MCF 10A (cell line): ENCODE measurements at regions of chr12 and their contacts with region 1.

Region 1: GRCh38 chr12:3299929-3300832 is 190.8 kb upstream of the PRMT8 start:
- DNase-seq: peak; percentile 96
- H3K4me3 Mint-ChIP-seq: peak overlapping the region; percentile 71
- H3K27ac Mint-ChIP-seq: peak overlapping the region; percentile 98
- H3K4me1 Mint-ChIP-seq: peaks cover 34% of the 10 kb centered on the region
- H3K27me3 Mint-ChIP-seq: no peaks in the 10 kb centered on the region
- CTCF ChIP-seq: peak; percentile 98

Region 2: GRCh38 chr12:2877047-2877952 is 422.9 kb before region 1 on chr12 and contains the starts of genes FOXM1 and RHNO1:
- CTCF ChIA-PET with region 1: no interaction called
- POLR2A ChIA-PET with region 1: no interaction called
- intact Hi-C with region 1: no loop called
- DNase-seq: peak; percentile 86
- H3K4me3 Mint-ChIP-seq: peak within 1 kb of the TSS; percentile 97
- H3K27ac Mint-ChIP-seq: peak within 1 kb of the TSS; percentile 98
- H3K4me1 Mint-ChIP-seq: peaks cover 23% of the 10 kb centered on the region
- H3K27me3 Mint-ChIP-seq: no peaks in the 10 kb centered on the region
- CTCF ChIP-seq: no peak
- total RNA-seq, gene FOXM1: 31.7 and 49.9 TPM in 2 replicates
- total RNA-seq, gene RHNO1: 47.0 and 60.9 TPM in 2 replicates

Region 3: GRCh38 chr12:3150931-3151835 is 149.0 kb before region 1 on chr12:
- CTCF ChIA-PET with region 1: no interaction called
- POLR2A ChIA-PET with region 1: no interaction called
- intact Hi-C with region 1: no loop called
- DNase-seq: no peak
- H3K4me3 Mint-ChIP-seq: no peak overlapping the region
- H3K27ac Mint-ChIP-seq: no peak overlapping the region
- H3K4me1 Mint-ChIP-seq: no peaks in the 10 kb centered on the region
- H3K27me3 Mint-ChIP-seq: no peaks in the 10 kb centered on the region
- CTCF ChIP-seq: no peak

Region 4: GRCh38 chr12:3350422-3350821 is 50.2 kb after region 1 on chr12:
- CTCF ChIA-PET with region 1: interaction called, 12 read pairs
- POLR2A ChIA-PET with region 1: no interaction called
- intact Hi-C with region 1: no loop called
- DNase-seq: no peak
- H3K4me3 Mint-ChIP-seq: no peak overlapping the region
- H3K27ac Mint-ChIP-seq: no peak overlapping the region
- H3K4me1 Mint-ChIP-seq: no peaks in the 10 kb centered on the region
- H3K27me3 Mint-ChIP-seq: no peaks in the 10 kb centered on the region
- CTCF ChIP-seq: no peak

Region 5: GRCh38 chr12:3520168-3520567 is 220.0 kb after region 1 on chr12:
- CTCF ChIA-PET with region 1: interaction called, 111 read pairs
- POLR2A ChIA-PET with region 1: interaction called, 24 read pairs
- intact Hi-C with region 1: loop called (anchors 1 kb)
- DNase-seq: peak; percentile 41
- H3K4me3 Mint-ChIP-seq: no peak overlapping the region
- H3K27ac Mint-ChIP-seq: no peak overlapping the region
- H3K4me1 Mint-ChIP-seq: peaks cover 9% of the 10 kb centered on the region
- H3K27me3 Mint-ChIP-seq: no peaks in the 10 kb centered on the region
- CTCF ChIP-seq: no peak

Region 6: GRCh38 chr12:3673981-3674708 is 374.0 kb after region 1 on chr12:
- CTCF ChIA-PET with region 1: interaction called, 85 read pairs
- POLR2A ChIA-PET with region 1: no interaction called
- intact Hi-C with region 1: no loop called
- DNase-seq: no peak
- H3K4me3 Mint-ChIP-seq: no peak overlapping the region
- H3K27ac Mint-ChIP-seq: no peak overlapping the region
- H3K4me1 Mint-ChIP-seq: peaks cover 6% of the 10 kb centered on the region
- H3K27me3 Mint-ChIP-seq: no peaks in the 10 kb centered on the region
- CTCF ChIP-seq: no peak

Region 7: GRCh38 chr12:3795492-3796133 is 495.4 kb after region 1 on chr12:
- CTCF ChIA-PET with region 1: interaction called, 49 read pairs
- POLR2A ChIA-PET with region 1: no interaction called
- intact Hi-C with region 1: no loop called
- DNase-seq: no peak
- H3K4me3 Mint-ChIP-seq: no peak overlapping the region
- H3K27ac Mint-ChIP-seq: no peak overlapping the region
- H3K4me1 Mint-ChIP-seq: no peaks in the 10 kb centered on the region
- H3K27me3 Mint-ChIP-seq: no peaks in the 10 kb centered on the region
- CTCF ChIP-seq: no peak

Region 8: DNA sequence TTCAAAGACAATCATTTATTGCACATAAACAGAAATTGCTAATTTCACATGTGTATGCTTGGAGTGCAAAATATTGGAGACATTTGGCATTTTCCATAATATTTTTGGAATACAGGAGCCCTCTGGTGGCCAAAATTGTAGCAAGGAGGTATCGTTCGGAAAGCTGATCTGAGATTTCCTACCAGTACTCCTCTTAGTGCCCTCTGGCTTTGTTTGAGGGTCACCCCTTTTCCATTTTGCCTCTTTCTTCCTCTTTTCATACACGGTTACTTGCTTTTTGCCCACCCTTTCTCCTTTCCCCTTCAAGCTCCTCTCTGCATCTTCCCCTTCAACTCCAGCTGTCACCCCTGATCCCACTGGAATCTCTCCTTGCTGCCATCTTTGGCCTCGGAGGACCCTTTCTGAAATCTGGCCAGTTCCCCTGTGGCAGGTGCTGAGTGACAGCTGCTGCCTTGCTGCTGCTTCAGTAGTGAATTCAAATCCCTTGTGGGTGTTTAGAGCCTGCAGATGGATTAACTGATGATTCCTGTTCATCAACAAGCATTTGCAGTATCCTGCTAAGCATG is 737.6 kb after region 1 on chr12:
- CTCF ChIA-PET with region 1: interaction called, 3 read pairs
- POLR2A ChIA-PET with region 1: interaction called, 3 read pairs
- intact Hi-C with region 1: loop called (anchors 5 kb)
- DNase-seq: peak; percentile 69
- H3K4me3 Mint-ChIP-seq: no peak overlapping the region
- H3K27ac Mint-ChIP-seq: no peak overlapping the region
- H3K4me1 Mint-ChIP-seq: peaks cover 22% of the 10 kb centered on the region
- H3K27me3 Mint-ChIP-seq: peaks cover 4% of the 10 kb centered on the region
- CTCF ChIP-seq: peak; percentile 71